ENCODE measurements at regions of chr3 and their contacts with region 1.

Region 1: DNA sequence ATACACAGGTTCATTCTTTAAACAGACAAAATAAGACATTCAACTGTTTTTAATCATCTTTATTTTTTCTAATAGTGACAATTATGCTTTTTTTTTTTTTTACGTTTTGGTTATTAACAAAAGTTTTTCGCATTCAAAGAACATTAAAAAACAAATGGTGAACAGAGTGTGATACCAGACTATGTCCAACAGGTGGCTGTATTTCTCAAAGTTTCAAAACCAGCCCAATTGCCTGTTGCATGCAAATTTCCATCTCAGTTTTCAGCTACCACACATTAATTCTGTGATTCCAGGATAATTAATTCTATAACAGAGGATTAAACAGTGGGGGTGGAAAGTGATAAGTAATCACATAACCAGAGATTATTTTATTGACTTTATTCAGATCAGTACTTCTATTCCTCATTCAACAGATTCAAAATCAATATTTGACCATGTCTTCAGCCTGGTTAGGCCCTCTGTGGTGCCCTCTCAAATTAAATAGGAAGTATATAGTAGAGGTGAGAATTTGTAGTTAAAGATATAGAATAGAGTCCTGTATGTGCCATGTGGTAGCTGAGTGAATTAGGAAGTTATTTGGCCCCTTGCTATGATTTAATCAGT is 122.2 kb upstream of the DCBLD2 start:
- DNase-seq: no peak
- H3K4me3 ChIP-seq: no peak overlapping the region
- H3K27ac ChIP-seq: no peak overlapping the region
- H3K4me1 ChIP-seq: no peaks in the 10 kb centered on the region
- H3K27me3 ChIP-seq: no peaks in the 10 kb centered on the region
- CTCF ChIP-seq: peak; percentile 56

Region 2: DNA sequence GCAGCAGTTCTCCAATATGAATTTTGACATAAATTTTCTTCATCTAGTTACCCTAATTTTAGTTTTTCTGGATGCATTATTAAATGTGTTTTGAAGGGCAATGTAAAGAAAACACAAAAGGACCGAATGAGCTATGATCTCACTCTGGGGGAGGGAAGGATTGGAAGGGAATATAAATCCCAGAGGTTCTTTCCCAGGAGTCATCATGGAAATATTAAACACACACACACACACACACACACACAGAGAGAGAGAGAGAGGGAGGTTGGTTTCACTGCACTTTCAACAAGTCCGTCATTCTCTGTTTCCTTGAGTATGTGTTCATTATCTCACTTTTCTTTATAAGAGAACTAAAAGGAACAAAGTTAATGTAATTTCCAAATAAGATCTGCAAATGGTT is 51.5 kb before region 1 on chr3:
- intact Hi-C with region 1: no loop called
- DNase-seq: no peak
- H3K4me3 ChIP-seq: no peak overlapping the region
- H3K27ac ChIP-seq: no peak overlapping the region
- H3K4me1 ChIP-seq: no peaks in the 10 kb centered on the region
- H3K27me3 ChIP-seq: no peaks in the 10 kb centered on the region
- CTCF ChIP-seq: no peak

Region 3: DNA sequence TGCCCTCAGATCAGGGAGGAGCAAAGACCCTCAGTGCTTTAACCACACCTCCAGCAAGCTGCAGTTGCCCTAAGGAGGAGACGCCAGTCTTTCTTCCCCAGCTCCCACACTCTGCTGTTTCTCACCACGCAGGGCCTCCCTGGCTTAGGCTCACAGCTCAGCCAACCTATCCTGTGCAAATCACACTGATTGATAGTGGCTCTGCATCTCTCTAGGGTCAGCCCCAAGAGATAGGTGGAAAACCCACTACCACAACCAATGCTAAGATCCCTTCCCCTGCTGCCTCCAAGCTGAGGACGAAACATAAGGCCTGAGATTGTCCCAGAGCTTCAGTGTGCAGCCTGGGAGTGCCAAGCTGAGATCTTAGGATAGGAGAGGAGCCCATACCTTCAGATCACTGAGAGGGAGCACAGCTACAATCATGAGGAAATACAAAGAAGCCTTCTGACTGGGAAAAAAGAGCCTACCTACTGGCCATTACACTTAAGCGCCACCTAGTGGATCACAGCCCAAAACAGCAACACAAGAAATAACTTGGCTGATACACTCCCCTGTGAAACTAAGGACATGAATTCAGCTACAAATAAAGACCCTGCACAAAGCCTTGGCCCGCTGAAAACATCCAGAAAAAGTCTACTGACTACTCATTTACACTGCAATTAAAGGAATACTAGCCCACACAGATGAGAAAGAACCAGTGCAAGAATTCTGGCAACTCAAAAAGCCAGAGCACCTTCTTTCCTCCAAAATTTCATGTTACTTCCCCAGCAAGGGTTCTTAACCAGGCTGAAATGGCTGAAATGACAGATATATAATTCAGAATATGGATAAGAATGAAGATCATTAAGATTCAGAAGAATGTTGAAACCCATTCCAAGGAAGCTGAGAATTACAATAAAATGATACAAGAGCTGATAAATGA is 149.3 kb after region 1 on chr3:
- intact Hi-C with region 1: loop called (anchors 2 kb)
- DNase-seq: peak; percentile 44
- H3K4me3 ChIP-seq: no peak overlapping the region
- H3K27ac ChIP-seq: no peak overlapping the region
- H3K4me1 ChIP-seq: no peaks in the 10 kb centered on the region
- H3K27me3 ChIP-seq: no peaks in the 10 kb centered on the region
- CTCF ChIP-seq: peak; percentile 42

Region 4: DNA sequence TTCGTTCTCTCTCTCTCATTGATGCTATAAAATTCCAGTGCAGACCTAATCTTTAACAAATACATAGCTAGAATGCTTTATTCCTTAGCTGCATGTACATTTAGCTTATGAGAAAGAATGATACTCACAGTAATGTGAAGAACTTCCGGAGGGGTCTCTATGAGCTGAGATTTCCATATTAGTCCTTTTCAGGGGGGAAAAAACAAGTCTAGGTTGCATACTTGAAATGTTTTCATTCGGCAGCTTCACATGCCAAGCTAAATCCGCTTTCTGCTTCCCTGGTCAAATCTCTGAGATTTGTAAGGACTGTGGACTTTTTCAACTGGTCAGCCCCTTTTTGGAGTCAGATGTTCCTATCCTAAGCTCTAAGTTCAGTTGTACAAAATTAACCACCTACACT is 503.2 kb after region 1 on chr3:
- intact Hi-C with region 1: loop called (anchors 10 kb)
- DNase-seq: no peak
- H3K4me3 ChIP-seq: no peak overlapping the region
- H3K27ac ChIP-seq: no peak overlapping the region
- H3K4me1 ChIP-seq: no peaks in the 10 kb centered on the region
- H3K27me3 ChIP-seq: no peaks in the 10 kb centered on the region
- CTCF ChIP-seq: no peak

Region 5: GRCh38 chr3:99753268-99753975 is 729.7 kb after region 1 on chr3:
- intact Hi-C with region 1: loop called (anchors 5 kb)
- DNase-seq: no peak
- H3K4me3 ChIP-seq: no peak overlapping the region
- H3K27ac ChIP-seq: no peak overlapping the region
- H3K4me1 ChIP-seq: no peaks in the 10 kb centered on the region
- H3K27me3 ChIP-seq: no peaks in the 10 kb centered on the region
- CTCF ChIP-seq: peak; percentile 71

Region 6: DNA sequence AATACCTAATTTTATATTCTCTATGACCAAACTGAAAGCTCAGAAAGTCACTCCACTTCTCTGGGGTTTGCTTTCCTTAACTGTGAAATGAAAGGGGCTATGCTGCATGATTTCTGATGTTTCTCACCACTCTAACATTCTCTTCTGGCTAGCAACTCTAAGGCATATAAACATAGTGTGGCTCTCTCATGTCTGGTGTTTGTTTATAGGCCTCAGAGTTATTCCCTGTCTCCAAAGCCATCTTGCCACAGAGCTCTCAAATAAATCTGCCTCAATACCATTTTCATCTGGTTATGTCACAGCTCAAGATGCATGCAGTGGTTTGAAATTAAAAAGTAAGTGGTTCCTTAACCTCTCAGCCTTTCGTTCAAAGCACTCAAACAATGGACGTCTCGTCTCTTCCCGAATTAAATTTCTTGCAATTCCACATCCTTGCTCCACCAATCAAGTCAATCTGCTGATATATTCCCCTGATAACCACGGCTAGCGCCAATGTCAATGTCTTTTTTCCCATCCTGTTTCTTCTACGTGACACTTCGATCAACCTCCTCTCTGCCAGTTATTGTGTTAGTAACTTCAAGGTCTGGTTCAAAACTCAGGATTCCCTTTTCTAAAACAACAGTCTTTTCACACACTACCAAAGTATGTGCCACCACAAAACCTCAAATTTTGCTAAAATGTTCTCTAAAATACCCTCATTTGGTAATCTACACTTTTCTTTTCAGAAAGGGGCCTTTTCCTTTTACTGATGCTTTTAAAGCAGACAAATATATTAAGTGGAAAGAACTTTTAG is 1361.2 kb after region 1 on chr3:
- intact Hi-C with region 1: no loop called
- DNase-seq: no peak
- H3K4me3 ChIP-seq: no peak overlapping the region
- H3K27ac ChIP-seq: no peak overlapping the region
- H3K4me1 ChIP-seq: no peaks in the 10 kb centered on the region
- H3K27me3 ChIP-seq: no peaks in the 10 kb centered on the region
- CTCF ChIP-seq: no peak

Measured in colonic mucosa (tissue), 4 donors.